ENCODE measurements at regions of chr1 and their contacts with region 1.

Region 1: GRCh38 chr1:211675230-211676105 is at the start of gene NEK2:
- DNase-seq: peak; percentile 96 to 98
- H3K4me3 ChIP-seq: peak within 1 kb of the TSS; percentile 83
- H3K4me3 Mint-ChIP-seq: peak within 1 kb of the TSS; percentile 91
- H3K27ac Mint-ChIP-seq: peak within 1 kb of the TSS; percentile 95
- H3K4me1 ChIP-seq: no peaks in the 10 kb centered on the region
- H3K4me1 Mint-ChIP-seq: peaks cover 17% of the 10 kb centered on the region
- H3K27me3 ChIP-seq: no peaks in the 10 kb centered on the region
- H3K27me3 Mint-ChIP-seq: no peaks in the 10 kb centered on the region
- CTCF ChIP-seq: no peak
- total RNA-seq, gene NEK2: 32.1 and 34.7 TPM in 2 replicates

Region 2: DNA sequence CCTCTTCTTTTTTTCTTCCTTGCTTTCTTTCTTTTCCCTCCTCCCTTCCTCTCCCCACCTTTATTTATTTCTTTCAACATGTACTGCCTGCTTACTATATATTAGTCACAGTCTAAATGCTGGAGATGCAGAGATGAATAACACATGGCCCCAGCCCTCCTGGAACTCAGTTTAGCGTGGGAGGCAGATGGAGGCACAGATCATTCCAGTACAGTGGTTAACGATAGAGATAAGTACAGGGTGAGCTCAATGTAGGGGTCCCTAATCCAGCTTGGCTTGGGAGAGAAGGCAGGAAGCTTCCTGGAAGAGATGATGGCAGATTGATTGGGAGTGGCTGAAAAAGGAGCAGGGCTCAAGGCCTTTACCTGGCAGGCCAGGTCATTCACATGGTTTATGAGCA is 554.2 kb after region 1 on chr1:
- CTCF ChIA-PET with region 1: interaction called, 10 read pairs
- POLR2A ChIA-PET with region 1: no interaction called
- intact Hi-C with region 1: no loop called
- DNase-seq: no peak
- H3K4me3 ChIP-seq: no peak overlapping the region
- H3K4me3 Mint-ChIP-seq: no peak overlapping the region
- H3K27ac Mint-ChIP-seq: no peak overlapping the region
- H3K4me1 ChIP-seq: 0 out of 2 replicates have a peak, but pooled peaks cover 8% of the 10 kb centered on the region
- H3K4me1 Mint-ChIP-seq: peaks cover 33% of the 10 kb centered on the region
- H3K27me3 ChIP-seq: no peaks in the 10 kb centered on the region
- H3K27me3 Mint-ChIP-seq: no peaks in the 10 kb centered on the region
- CTCF ChIP-seq: no peak